Left lung (tissue), 14 donors: ENCODE measurements at regions of chr3 and their contacts with region 1.

Region 1: GRCh38 chr3:129490242-129491045 is 38.0 kb upstream of the RHO start:
- DNase-seq: peak; percentile 65 to 91 (median 88)
- ATAC-seq: peak; percentile 90
- H3K4me3 ChIP-seq: no peak overlapping the region
- H3K27ac ChIP-seq: peak overlapping the region; percentile 69 to 76
- H3K4me1 ChIP-seq: peaks cover 17 to 51% of the 10 kb centered on the region in 2 donors
- H3K27me3 ChIP-seq: no peaks in the 10 kb centered on the region
- CTCF ChIP-seq: peak; percentile 82 to 91

Region 2: GRCh38 chr3:129596194-129597086 is 106.0 kb after region 1 on chr3:
- intact Hi-C with region 1: loop called in 1 of 2 experiments (anchors 10 kb)
- DNase-seq: peak in 3 of 4 donors; percentile 81 to 94 (median 91)
- ATAC-seq: peak; percentile 54
- H3K4me3 ChIP-seq: peak overlapping the region in 1 of 2 donors; percentile 1
- H3K27ac ChIP-seq: peak overlapping the region; percentile 83 to 91
- H3K4me1 ChIP-seq: peaks cover 83 to 100% of the 10 kb centered on the region in 2 donors
- H3K27me3 ChIP-seq: no peaks in the 10 kb centered on the region
- CTCF ChIP-seq: no peak

Region 3: DNA sequence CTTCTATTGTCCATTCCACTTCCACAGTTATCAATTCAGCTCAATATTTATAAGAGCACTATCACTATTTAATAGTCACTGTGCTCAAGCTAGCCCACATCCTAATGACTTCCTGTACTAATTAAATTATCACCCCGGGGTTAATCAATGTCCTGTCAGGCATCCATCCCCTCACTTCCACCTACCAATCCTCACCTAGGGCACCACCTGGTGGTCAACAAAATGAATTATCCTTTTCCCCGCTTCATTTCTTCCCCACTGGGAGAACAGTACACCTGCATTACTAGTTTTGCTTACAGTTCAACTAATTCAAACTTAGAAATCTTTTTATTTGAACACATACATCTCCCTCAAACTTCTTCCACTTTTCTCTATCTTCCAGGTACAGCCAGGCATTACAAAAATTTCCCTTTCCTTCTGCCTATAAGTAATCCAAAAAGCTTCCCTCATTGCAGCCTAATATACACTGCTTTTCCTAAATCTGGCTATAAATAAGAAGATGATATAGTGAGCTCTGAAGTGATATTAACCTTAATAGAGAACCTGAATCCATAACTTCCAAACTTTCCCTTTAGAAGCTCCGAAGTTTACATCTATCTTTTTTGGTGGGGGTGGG is 334.6 kb after region 1 on chr3:
- intact Hi-C with region 1: loop called in 1 of 2 experiments (anchors 10 kb)
- DNase-seq: peak in 2 of 4 donors; percentile 32 to 56
- ATAC-seq: peak; percentile 74
- H3K4me3 ChIP-seq: no peak overlapping the region
- H3K27ac ChIP-seq: no peak overlapping the region
- H3K4me1 ChIP-seq: peaks cover 0 to 49% of the 10 kb centered on the region in 2 donors
- H3K27me3 ChIP-seq: no peaks in the 10 kb centered on the region
- CTCF ChIP-seq: peak; percentile 55 to 64